ENCODE measurements at regions of chr1 and their contacts with region 1.

Region 1: DNA sequence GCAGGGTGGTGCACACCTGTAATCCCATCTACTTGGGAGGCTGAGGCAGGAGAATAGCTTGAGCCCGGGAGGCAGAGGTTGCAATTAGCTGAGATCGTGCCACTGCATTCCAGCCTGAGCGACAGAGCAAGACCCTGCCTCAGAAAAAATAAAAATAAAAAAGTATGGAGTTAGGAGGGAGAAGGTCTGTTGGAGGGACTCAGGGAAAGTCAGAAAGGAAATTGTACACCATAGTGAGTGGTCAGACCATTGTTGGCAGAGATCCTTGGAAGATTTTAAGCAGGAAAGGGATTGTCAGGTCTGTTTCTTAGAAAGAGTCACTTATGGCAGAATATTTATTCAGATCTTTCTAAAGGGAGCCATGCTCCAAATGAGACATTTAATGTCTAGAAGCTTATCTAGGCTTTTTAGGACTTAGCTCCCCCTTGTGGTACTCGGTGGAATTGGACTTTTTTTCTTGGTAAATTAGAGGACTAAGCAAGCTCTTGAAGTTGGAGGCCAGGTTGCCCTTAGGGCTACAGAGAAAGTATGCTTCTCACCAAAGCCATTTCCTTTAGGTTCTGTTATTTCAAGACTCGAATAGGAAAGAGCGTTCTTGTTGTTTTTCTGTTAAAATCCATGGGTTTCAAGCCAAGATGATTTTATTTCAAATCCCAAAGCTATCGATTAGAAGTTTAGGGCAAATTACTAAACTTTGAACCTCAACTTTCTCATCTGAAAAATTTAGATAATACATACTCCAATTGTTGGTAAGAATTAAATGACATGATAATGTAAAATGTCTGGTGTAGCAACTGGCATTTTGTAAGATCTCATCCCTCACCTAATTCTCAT is 16.5 kb downstream of the MIA3 start:
- DNase-seq: peak; percentile 61

Region 2: DNA sequence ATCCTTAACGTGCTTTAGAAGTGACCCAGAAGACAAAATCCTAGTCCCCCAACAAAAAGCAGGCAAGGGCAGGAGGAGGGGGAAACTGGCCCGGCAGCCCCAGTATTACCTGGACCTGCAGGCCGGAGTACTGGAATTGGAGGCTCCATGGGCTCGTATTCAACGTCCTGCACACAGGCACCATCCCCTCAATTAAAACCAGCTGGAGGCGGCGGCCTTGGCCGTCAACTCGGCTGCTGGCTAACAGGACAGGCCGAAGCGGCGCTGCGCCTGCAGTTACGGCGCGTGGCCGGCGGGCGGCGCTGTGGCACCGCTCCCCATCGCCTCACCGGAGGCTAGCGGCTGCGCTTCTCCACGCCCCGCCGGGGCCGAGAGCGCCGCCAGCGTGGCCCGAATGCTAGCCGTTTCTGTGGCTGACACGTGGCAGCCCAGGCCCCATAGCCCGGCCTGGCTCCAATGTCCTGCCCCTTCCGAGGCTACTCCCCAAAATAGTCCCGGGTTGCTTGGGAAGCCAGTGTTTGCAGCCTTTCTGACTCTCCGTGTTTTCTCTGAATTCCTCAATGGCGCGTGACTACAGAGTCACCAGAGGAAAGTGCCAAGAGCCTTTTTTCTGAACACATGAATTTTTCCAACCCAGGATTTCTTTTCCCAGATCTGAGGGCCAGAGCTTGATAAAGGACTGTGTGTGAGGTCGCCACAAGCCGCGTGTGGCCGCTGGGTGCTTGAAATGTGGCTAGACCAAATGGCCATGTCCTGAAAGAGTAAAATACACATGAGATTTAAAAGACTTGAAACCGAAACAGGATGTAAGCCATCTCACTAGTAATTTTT is 169.0 kb before region 1 on chr1:
- CTCF ChIA-PET with region 1: interaction called, 20 read pairs
- POLR2A ChIA-PET with region 1: interaction called, 8 read pairs
- DNase-seq: peak; percentile 92

Region 3: DNA sequence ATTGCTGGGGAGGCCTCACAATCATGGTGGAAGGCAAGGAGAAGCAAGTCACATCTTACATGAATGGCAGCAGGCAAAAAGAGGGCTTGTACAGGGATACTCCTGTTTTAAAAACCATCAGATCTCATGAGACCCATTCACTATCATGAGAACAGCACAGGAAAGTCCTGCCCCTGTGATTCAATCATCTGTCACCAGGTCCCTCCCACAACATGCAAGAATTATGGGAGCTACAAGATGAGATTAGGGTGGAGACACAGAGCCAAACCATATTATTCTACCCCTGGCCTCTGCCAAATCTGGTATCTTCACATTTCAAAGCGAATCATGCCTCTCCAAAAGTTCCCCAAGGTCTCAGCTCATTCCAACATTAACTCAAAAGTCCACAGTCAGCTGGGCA is 27.6 kb before region 1 on chr1:
- CTCF ChIA-PET with region 1: no interaction called
- POLR2A ChIA-PET with region 1: no interaction called
- DNase-seq: no peak

Region 4: DNA sequence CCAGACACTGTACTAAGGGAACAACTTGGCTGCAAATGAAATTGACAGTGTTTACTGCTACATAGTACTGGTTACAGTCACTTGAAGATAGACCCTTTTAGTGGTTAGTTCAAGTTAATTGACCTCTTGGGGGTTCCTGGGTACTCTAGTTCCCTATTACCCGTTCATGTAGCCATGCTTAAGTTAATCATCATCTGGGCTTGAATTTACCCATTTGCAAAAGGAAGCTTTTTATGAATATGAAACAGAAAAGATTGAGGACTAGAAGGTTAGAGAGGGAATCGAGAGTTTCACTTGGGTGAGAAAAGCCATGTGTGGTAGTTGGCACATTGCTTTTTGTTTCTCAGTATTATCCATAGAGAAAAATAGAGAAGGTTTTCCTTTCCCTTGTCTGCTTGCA is 13.8 kb before region 1 on chr1:
- CTCF ChIA-PET with region 1: interaction called, 11 read pairs
- POLR2A ChIA-PET with region 1: no interaction called
- DNase-seq: no peak